ENCODE measurements at regions of chr1 and their contacts with region 1.

Region 1: DNA sequence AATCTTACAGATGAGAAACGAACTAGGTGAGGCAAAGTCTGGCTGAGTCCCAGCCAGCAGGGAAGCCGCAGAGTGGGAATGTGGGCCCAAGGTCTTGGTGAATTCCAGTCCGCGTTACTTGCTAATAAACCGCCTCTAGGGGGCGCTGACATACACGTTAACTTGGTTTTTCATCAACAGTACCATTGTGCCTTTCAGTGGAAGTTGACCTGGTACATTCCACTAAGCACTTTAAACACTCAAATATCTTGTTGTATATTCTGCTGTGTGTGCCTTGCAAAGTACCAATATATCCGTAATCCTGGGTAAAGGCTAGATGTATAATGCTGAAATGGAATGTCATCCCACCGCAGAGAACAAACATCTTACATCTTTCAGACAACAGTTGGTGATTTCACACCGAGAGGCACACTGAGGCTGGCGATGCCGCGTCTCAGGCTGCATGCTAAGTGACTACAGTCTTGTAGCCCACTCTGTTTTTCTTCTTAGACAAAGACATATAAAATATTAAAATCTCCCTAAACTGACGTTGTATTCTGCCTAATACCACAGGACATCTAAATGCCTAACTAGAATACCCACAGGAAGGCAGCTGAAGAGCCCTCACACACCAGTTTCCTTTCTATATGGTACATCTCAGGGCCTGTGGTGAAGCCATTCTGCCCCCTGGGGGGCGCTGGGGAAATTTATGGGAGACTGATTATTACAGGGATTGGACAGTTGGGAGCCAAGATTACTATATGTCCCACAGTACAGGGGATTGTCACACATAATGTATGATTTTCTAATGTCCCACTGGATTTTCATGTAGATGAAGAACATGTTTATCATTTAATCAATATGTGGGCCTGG is 49.2 kb upstream of the C1orf198 start:
- DNase-seq: peak; percentile 74 to 94
- ATAC-seq: peak; percentile 83

Region 2: GRCh38 chr1:230781594-230781993 is 135.9 kb before region 1 on chr1:
- intact Hi-C with region 1: no loop called
- DNase-seq: no peak
- ATAC-seq: no peak

Region 3: GRCh38 chr1:230797942-230798418 is 119.5 kb before region 1 on chr1:
- intact Hi-C with region 1: loop called in 1 of 2 experiments (anchors 5 kb)
- DNase-seq: peak; percentile 31 to 37
- ATAC-seq: peak; percentile 83

Region 4: DNA sequence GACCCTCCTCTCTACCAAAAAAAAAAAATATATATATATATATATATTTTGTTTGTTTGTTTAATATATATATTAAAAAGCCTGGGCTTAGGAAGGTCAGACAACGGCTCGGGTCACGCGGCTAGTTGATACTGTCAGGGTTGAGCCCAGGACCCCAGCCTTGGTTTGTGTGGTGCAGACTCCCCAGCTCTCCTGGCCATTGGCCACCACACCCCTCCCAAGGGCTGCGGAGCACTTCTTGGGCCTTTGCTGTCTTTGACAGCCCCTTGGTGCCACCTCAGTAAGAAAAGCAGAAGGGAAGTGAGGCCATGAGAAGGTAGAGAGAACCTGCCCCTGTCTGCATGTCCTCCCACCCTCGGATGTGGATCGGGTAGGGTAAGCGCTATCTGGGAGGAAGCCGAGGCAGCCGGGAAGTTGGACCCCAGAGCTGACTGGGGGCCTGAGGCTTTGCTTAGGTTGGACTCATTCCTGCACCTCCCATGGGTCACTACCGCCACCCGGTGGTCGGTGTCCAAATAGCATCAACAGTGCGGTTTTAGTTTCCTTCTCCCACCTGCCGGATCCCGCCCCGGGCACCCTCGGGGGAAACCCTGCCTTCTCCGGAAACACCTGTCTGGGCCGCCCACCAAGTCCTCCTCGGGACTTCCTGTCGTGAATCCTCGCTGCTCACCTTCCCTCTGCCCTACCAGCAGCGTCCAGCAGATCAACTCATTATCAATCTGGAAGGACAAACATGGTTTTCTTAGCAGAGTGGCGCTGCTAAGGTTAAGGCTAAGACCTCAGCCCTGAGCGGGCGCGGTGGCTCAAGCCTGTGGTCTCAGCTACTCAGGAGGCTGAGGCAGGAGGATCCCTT is 293.7 kb after region 1 on chr1:
- intact Hi-C with region 1: loop called in 1 of 2 experiments (anchors 10 kb)
- DNase-seq: peak; percentile 84 to 91
- ATAC-seq: peak; percentile 86